ENCODE measurements at regions of chr2 and their contacts with region 1.

Region 1: GRCh38 chr2:84925724-84926376 is 20.4 kb downstream of the TMSB10 start:
- DNase-seq: peak; percentile 95 to 97 (median 96)
- H3K4me3 ChIP-seq: peak overlapping the region in 6 of 7 experiments; percentile 52 to 83 (median 68)
- H3K27ac ChIP-seq: no peak overlapping the region
- H3K4me1 ChIP-seq: peaks cover 0 to 29% (median 21%) of the 10 kb centered on the region in 4 experiments
- H3K27me3 ChIP-seq: no peaks in the 10 kb centered on the region

Region 2: DNA sequence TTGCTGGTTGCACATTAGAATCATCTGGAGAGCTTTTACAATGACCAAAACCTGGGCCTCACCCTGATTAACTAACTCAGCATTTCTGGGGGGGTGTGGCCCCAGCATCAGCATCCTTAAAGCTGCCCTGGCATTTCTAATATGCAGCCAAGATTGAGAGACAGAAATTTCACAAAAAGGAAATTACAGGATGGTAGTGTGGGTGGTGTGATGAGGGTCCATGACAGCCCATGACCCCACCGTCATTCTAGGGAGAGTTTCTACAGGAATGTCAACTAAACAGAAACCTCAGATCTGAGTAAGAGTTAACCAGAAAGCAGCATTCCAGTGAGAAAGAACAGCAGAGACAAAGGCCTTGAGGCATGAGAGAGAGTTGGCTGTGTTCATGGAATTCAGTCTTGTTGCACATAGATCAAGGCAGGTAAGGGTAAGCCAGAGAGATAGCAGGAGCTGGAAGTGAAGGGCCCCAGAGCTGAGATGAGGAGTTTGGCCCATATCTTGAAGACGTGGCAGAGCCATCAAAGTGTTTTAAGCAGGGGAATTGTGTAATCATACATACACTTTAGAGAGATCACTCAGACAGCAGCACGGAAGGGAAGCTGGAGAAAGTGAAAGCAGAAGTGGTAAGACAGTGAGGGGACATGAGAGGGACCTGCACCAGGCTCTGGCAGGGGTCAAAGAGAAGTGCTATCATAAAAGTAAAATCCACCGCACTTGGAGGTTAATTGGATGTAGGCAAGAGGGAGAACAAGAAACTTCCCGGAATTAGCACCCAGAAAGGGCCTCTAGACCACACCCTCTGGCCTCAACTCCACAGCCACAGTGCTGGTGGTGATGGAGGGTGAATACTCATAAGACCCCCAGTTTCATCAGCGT is 37.2 kb before region 1 on chr2:
- CTCF ChIA-PET with region 1: interaction called, 20 read pairs
- POLR2A ChIA-PET with region 1: no interaction called
- DNase-seq: peak; percentile 74 to 92 (median 91)
- H3K4me3 ChIP-seq: peak overlapping the region in 5 of 7 experiments; percentile 7 to 46 (median 10)
- H3K27ac ChIP-seq: peak overlapping the region; percentile 22 to 71
- H3K4me1 ChIP-seq: peaks cover 8 to 17% (median 13%) of the 10 kb centered on the region in 4 experiments
- H3K27me3 ChIP-seq: peaks cover 0 to 7% (median 2%) of the 10 kb centered on the region in 5 experiments

Region 3: DNA sequence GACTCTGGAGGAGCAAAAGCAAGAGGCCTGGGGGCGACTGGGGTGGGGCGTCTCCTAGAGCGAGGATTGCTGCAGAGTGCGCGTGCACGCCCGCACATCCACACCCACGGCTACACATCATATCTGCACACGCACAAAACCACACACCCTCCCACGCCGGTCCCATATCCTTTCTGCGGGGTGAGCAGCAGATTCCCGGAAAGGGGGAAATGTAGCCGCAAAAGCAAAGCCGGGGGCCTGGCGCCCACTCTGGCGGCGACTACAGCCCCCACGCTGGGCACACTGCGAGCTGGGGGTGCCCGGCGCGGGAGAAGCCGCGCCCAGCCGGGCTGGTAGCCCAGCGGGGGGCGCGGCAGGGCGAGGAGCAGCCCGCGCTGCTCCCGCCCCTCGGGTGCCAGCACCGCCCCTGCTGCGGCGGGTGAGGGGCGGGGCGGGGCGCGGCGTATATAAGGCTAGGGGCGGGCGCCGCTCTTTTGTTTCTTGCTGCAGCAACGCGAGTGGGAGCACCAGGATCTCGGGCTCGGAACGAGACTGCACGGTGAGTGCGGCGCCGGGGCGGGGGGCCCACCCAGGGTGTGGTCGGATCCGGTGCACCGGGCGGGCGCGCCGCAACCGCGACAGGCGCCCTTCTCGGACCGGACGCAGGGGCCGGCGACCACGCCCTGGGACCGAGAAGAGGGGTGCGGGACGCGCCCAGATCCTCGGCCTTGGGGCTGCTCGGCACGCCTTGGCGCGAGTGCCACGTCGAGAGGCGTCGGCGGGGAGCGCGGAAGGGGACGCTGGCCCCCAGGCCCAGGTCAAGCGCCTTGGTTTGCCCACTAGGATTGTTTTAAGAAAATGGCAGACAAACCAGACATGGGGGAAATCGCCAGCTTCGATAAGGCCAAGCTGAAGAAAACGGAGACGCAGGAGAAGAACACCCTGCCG is 20.4 kb before region 1 on chr2 and contains the start of gene TMSB10:
- CTCF ChIA-PET with region 1: interaction called, 42 read pairs
- POLR2A ChIA-PET with region 1: interaction called, 8 read pairs
- DNase-seq: peak; percentile 78 to 91 (median 89)
- H3K4me3 ChIP-seq: peak within 1 kb of the TSS; percentile 75 to 98 (median 85)
- H3K27ac ChIP-seq: peak within 1 kb of the TSS; percentile 40 to 77
- H3K4me1 ChIP-seq: peaks cover 0 to 51% (median 23%) of the 10 kb centered on the region in 4 experiments
- H3K27me3 ChIP-seq: no peaks in the 10 kb centered on the region

Region 4: GRCh38 chr2:84939426-84940087 is 13.7 kb after region 1 on chr2:
- CTCF ChIA-PET with region 1: interaction called, 34 read pairs
- POLR2A ChIA-PET with region 1: interaction called, 4 read pairs
- DNase-seq: peak; percentile 84 to 95 (median 95)
- H3K4me3 ChIP-seq: peak overlapping the region in 3 of 7 experiments; percentile 28 to 68 (median 38)
- H3K27ac ChIP-seq: peak overlapping the region; percentile 59 to 69
- H3K4me1 ChIP-seq: peaks cover 10 to 26% (median 21%) of the 10 kb centered on the region in 4 experiments
- H3K27me3 ChIP-seq: no peaks in the 10 kb centered on the region

Region 5: GRCh38 chr2:84970868-84971509 is 45.1 kb after region 1 on chr2 and contains the start of gene KCMF1:
- CTCF ChIA-PET with region 1: interaction called, 17 read pairs
- POLR2A ChIA-PET with region 1: interaction called, 4 read pairs
- DNase-seq: peak; percentile 54 to 75 (median 66)
- H3K4me3 ChIP-seq: peak within 1 kb of the TSS; percentile 82 to 95 (median 85)
- H3K27ac ChIP-seq: peak within 1 kb of the TSS; percentile 93 to 95
- H3K4me1 ChIP-seq: peaks cover 19 to 45% (median 31%) of the 10 kb centered on the region in 4 experiments
- H3K27me3 ChIP-seq: no peaks in the 10 kb centered on the region

Region 6: DNA sequence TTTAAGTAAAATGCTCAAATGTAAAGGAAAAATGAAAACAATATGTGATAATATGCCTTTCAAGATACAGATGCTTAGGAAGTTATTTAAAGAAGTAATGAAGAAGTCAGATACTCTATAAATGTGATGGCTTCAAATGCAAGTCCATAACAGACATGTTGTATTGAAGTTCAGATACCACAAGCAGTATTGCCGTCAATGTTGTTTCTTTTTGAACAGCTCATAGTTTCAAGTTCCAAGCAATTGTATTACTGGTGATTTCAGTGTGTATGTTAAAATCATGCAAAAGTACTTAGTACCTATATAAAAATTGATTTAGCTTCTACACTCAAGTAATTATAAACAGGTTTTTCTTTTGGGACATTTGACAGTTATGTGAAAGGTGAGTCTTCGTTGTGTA is 70.0 kb after region 1 on chr2:
- CTCF ChIA-PET with region 1: no interaction called
- POLR2A ChIA-PET with region 1: no interaction called
- DNase-seq: no peak
- H3K4me3 ChIP-seq: no peak overlapping the region
- H3K27ac ChIP-seq: no peak overlapping the region
- H3K4me1 ChIP-seq: no peaks in the 10 kb centered on the region
- H3K27me3 ChIP-seq: no peaks in the 10 kb centered on the region